Gastrocnemius medialis (tissue), 4 donors: ENCODE measurements at regions of chr20 and their contacts with region 1.

Region 1: DNA sequence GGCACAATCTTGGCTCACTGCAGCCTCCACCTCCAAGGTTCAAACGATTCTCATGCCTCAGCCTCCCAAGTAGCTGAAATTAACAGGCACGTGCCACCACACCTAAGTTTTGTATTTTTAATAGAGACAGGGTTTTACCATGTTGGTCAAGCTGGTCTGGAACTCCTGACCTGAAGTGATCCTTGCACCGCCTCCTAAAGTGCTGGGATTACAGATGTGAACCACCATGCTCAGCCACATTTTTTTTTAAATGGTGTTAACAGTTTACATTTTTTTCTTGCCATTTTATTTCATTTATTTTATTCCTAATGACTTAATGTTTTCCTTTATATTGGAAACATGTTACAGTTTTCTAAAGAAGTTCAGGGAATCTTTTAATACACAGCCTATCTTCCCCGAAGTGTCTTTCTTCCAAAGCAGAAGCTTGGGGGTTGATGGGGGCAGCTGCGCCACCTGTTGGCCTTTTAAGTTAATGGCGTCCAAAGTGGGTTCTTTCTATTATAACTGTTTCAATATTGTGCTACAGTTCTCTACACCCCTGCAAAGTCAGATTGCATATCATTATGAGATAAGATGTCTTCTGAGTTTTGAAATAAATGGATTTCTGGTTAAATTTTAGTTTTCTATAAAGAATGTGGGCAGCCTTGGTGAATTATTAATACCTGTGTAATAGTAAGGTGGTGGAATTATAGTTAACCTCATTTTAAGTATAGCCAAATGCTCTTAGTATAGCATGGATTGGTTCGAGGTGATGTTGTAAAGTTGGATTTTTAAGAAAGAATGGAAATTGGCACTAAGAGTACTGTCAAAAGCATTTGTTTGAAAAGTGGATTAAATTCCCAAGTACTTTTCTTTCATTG is 42.0 kb upstream of the PLCG1 start:
- DNase-seq: peak in 1 of 2 donors; percentile 34
- ATAC-seq: peak; percentile 51 to 59
- H3K4me3 ChIP-seq: no peak overlapping the region
- H3K27ac ChIP-seq: no peak overlapping the region
- H3K4me1 ChIP-seq: no peaks in the 10 kb centered on the region
- H3K27me3 ChIP-seq: no peaks in the 10 kb centered on the region
- CTCF ChIP-seq: peak; percentile 66 to 90 (median 78)
- POLR2A ChIP-seq: no peak

Region 2: GRCh38 chr20:40970201-40970600 is 125.1 kb before region 1 on chr20:
- in situ Hi-C with region 1: loop called in 3 of 4 experiments (anchors 5 kb)
- intact Hi-C with region 1: loop called (anchors 1 kb)
- DNase-seq: no peak
- ATAC-seq: no peak
- H3K4me3 ChIP-seq: no peak overlapping the region
- H3K27ac ChIP-seq: no peak overlapping the region
- H3K4me1 ChIP-seq: no peaks in the 10 kb centered on the region
- H3K27me3 ChIP-seq: no peaks in the 10 kb centered on the region
- CTCF ChIP-seq: no peak
- POLR2A ChIP-seq: no peak

Region 3: DNA sequence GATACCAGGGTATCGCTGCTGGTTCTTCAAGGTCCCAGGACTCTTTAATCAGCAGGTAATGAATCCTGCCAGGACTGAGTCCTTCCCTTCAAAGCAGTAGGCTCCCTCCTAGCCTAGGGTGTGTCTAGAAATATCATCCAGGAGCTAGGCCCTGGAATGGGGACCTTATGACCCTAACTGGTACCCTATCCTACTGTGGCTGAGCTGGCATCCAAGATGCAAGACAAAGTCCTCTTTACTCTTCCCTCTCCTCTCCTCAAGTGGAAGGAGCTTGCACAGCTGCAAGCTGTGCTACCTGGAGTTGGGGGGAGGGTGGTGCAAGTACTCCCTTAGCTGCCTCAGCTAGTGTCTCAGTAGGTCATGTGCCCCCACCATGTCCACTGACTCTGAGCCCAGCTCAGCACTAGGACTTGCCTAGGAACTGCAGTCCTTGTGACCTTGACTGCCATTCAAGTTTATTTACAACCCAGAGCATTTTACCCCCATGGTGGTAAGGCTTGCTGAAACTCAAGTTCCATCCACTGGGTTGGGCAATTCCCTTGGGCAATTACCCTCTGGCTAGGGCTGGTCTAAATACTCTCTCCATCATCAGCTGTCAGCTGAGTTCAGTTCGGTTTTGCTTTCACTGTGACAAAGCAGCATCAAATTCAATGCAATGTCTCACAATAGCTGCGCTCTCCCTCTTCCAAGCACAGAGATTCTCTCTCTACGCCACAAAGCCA is 115.1 kb before region 1 on chr20:
- in situ Hi-C with region 1: loop called in 1 of 4 experiments (anchors 5 kb)
- intact Hi-C with region 1: no loop called
- DNase-seq: no peak
- ATAC-seq: no peak
- H3K4me3 ChIP-seq: no peak overlapping the region
- H3K27ac ChIP-seq: no peak overlapping the region
- H3K4me1 ChIP-seq: no peaks in the 10 kb centered on the region
- H3K27me3 ChIP-seq: no peaks in the 10 kb centered on the region
- CTCF ChIP-seq: no peak
- POLR2A ChIP-seq: no peak

Region 4: GRCh38 chr20:40990542-40991120 is 104.7 kb before region 1 on chr20:
- in situ Hi-C with region 1: loop called in 1 of 4 experiments (anchors 5 kb)
- intact Hi-C with region 1: loop called (anchors 1 kb)
- DNase-seq: peak; percentile 52 to 66
- ATAC-seq: peak; percentile 96 to 98
- H3K4me3 ChIP-seq: no peak overlapping the region
- H3K27ac ChIP-seq: no peak overlapping the region
- H3K4me1 ChIP-seq: no peaks in the 10 kb centered on the region
- H3K27me3 ChIP-seq: no peaks in the 10 kb centered on the region
- CTCF ChIP-seq: peak; percentile 34 to 83 (median 75)
- POLR2A ChIP-seq: no peak